ENCODE measurements at regions of chr5 and their contacts with region 1.

Region 1: GRCh38 chr5:151565971-151566370 is 25.2 kb downstream of the FAT2 start:
- DNase-seq: no peak
- ATAC-seq: no peak
- H3K4me3 ChIP-seq: no peak overlapping the region
- H3K27ac ChIP-seq: no peak overlapping the region
- H3K4me1 ChIP-seq: peaks cover 16% of the 10 kb centered on the region
- H3K27me3 ChIP-seq: no peaks in the 10 kb centered on the region
- CTCF ChIP-seq: no peak

Region 2: DNA sequence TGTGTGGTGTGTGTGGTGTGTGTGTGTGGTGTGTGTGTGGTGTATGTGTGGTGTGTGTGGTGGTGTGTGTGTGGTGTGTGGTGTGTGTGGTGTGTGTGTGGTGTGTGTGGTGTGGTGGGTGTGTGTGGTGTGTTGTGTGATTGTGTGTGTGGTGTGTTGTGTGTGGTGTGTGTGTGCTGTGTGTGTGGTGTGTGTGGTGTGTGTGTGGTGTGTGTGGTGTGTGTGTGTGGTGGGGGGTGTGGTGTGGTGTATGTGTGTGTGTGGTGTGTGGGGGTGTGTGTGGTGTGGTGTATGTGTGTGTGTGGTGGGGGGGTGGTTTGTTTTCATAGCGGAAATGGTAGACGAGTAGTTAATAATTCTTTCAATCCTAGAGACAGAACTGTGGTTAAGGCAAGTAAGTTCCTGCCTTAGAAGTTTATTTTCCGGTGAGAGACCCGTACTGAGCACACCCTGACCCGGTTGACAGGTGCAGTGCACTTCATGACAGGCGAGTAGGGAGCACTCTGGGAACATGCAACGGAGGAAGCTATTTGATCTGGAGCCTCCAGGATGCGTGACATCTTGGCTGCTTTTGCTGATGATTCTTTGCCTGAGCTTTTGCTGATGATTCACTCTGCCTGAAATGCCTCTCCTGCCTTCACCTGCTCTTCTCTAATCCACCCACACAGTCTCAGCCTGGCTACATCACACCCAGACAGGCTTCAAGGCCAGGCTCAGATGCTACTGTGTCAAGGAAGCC is 46.9 kb after region 1 on chr5:
- CTCF ChIA-PET with region 1: no interaction called
- POLR2A ChIA-PET with region 1: no interaction called
- intact Hi-C with region 1: loop called (anchors 1 kb)
- DNase-seq: peak; percentile 83
- ATAC-seq: peak; percentile 16
- H3K4me3 ChIP-seq: no peak overlapping the region
- H3K27ac ChIP-seq: peak overlapping the region; percentile 29
- H3K4me1 ChIP-seq: peaks cover 45% of the 10 kb centered on the region
- H3K27me3 ChIP-seq: no peaks in the 10 kb centered on the region
- CTCF ChIP-seq: no peak